Activated naive CD4-positive, alpha-beta T cell treated with anti-CD3 and anti-CD28 coated beads for 36 hours (primary cell): ENCODE measurements at regions of chr7 and their contacts with region 1.

Region 1: GRCh38 chr7:35825974-35826373 is 25.1 kb downstream of the SEPTIN7 start:
- DNase-seq: no peak
- H3K4me3 Mint-ChIP-seq: no peak overlapping the region
- H3K27ac Mint-ChIP-seq: no peak overlapping the region
- H3K4me1 Mint-ChIP-seq: peaks cover 39% of the 10 kb centered on the region
- H3K27me3 Mint-ChIP-seq: no peaks in the 10 kb centered on the region

Region 2: DNA sequence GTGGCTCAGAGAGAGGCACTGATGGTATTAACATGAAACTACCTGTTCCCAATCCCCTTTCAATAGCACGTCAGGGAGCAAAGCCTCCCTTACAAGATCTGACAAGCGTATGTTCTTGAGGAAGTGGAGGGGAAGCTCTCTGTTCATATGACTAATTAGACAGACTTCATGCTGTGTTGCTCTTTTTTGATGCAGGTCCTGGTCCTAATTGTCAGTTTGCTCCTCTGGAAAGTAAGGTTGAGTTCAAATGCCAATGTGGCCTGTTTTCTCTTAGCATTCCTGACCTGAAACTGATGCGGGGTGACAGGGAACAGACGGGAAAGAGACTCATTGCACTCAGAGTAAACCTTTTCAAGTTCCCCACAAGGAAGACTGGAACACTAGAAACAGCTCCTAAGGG is 545.1 kb before region 1 on chr7:
- CTCF ChIA-PET with region 1: no interaction called
- intact Hi-C with region 1: no loop called
- DNase-seq: no peak
- H3K4me3 Mint-ChIP-seq: no peak overlapping the region
- H3K27ac Mint-ChIP-seq: no peak overlapping the region
- H3K4me1 Mint-ChIP-seq: no peaks in the 10 kb centered on the region
- H3K27me3 Mint-ChIP-seq: peaks cover 13% of the 10 kb centered on the region

Region 3: GRCh38 chr7:35839860-35840854 is 14.2 kb after region 1 on chr7:
- CTCF ChIA-PET with region 1: no interaction called
- intact Hi-C with region 1: loop called (anchors 2 kb)
- DNase-seq: no peak
- H3K4me3 Mint-ChIP-seq: no peak overlapping the region
- H3K27ac Mint-ChIP-seq: no peak overlapping the region
- H3K4me1 Mint-ChIP-seq: peaks cover 39% of the 10 kb centered on the region
- H3K27me3 Mint-ChIP-seq: no peaks in the 10 kb centered on the region